WTC11 (cell line): ENCODE measurements at regions of chr16 and their contacts with region 1.

Region 1: GRCh38 chr16:29842732-29843346 is 20.2 kb downstream of the CDIPT start:
- DNase-seq: no peak
- ATAC-seq: 0 out of 2 replicates have a peak, but pooled peaks have one; percentile 33
- H3K4me3 Mint-ChIP-seq: no peak overlapping the region
- H3K27ac Mint-ChIP-seq: no peak overlapping the region
- H3K4me1 Mint-ChIP-seq: no peaks in the 10 kb centered on the region
- H3K27me3 Mint-ChIP-seq: no peaks in the 10 kb centered on the region; the same call in 1 of the 2 replicates
- CTCF ChIP-seq: no peak

Region 2: GRCh38 chr16:29775742-29776408 is 67.0 kb before region 1 on chr16:
- CTCF ChIA-PET with region 1: no interaction called
- POLR2A ChIA-PET with region 1: no interaction called
- DNase-seq: no peak
- ATAC-seq: no peak
- H3K4me3 Mint-ChIP-seq: no peak overlapping the region
- H3K27ac Mint-ChIP-seq: no peak overlapping the region
- H3K4me1 Mint-ChIP-seq: peaks cover 8% of the 10 kb centered on the region
- H3K27me3 Mint-ChIP-seq: peaks cover 30% of the 10 kb centered on the region
- CTCF ChIP-seq: no peak

Region 3: GRCh38 chr16:29815793-29816693 is 26.8 kb before region 1 on chr16 and contains the start of gene PAGR1:
- CTCF ChIA-PET with region 1: interaction called, 81 read pairs
- POLR2A ChIA-PET with region 1: no interaction called
- DNase-seq: peak; percentile 98
- ATAC-seq: peak; percentile 56
- H3K4me3 Mint-ChIP-seq: peak within 1 kb of the TSS; percentile 94
- H3K27ac Mint-ChIP-seq: peak within 1 kb of the TSS; percentile 100
- H3K4me1 Mint-ChIP-seq: peaks cover 56% of the 10 kb centered on the region
- H3K27me3 Mint-ChIP-seq: no peaks in the 10 kb centered on the region; the same call in 1 of the 2 replicates
- CTCF ChIP-seq: peak; percentile 81
- total RNA-seq, gene PAGR1: 60.1 to 69.0 TPM (median 66.8 TPM) in 3 replicates

Region 4: GRCh38 chr16:29883987-29884386 is 41.1 kb after region 1 on chr16:
- CTCF ChIA-PET with region 1: no interaction called
- POLR2A ChIA-PET with region 1: no interaction called
- DNase-seq: no peak
- ATAC-seq: peak; percentile 55
- H3K4me3 Mint-ChIP-seq: no peak overlapping the region
- H3K27ac Mint-ChIP-seq: no peak overlapping the region
- H3K4me1 Mint-ChIP-seq: no peaks in the 10 kb centered on the region
- H3K27me3 Mint-ChIP-seq: no peaks in the 10 kb centered on the region
- CTCF ChIP-seq: no peak

Region 5: GRCh38 chr16:29968205-29968604 is 125.4 kb after region 1 on chr16:
- CTCF ChIA-PET with region 1: no interaction called
- POLR2A ChIA-PET with region 1: no interaction called
- DNase-seq: no peak
- ATAC-seq: no peak
- H3K4me3 Mint-ChIP-seq: no peak overlapping the region
- H3K27ac Mint-ChIP-seq: no peak overlapping the region
- H3K4me1 Mint-ChIP-seq: no peaks in the 10 kb centered on the region; the same call in 1 of the 2 replicates
- H3K27me3 Mint-ChIP-seq: peaks cover 18% of the 10 kb centered on the region
- CTCF ChIP-seq: no peak